Dorsolateral prefrontal cortex (tissue), 120 donors: ENCODE measurements at regions of chr15 and their contacts with region 1.

Region 1: GRCh38 chr15:73697033-73697467 is 12.9 kb downstream of the CD276 start:
- DNase-seq: peak; percentile 14 to 82 (median 70)
- H3K4me3 ChIP-seq: peak overlapping the region in 1 of 59 donors; percentile 10
- H3K27ac ChIP-seq: peak overlapping the region in 33 of 59 donors; percentile 5 to 72 (median 38)
- H3K27me3 ChIP-seq: no peaks in the 10 kb centered on the region
- CTCF ChIP-seq: peak in 5 of 56 donors; percentile 4 to 19 (median 8)

Region 2: DNA sequence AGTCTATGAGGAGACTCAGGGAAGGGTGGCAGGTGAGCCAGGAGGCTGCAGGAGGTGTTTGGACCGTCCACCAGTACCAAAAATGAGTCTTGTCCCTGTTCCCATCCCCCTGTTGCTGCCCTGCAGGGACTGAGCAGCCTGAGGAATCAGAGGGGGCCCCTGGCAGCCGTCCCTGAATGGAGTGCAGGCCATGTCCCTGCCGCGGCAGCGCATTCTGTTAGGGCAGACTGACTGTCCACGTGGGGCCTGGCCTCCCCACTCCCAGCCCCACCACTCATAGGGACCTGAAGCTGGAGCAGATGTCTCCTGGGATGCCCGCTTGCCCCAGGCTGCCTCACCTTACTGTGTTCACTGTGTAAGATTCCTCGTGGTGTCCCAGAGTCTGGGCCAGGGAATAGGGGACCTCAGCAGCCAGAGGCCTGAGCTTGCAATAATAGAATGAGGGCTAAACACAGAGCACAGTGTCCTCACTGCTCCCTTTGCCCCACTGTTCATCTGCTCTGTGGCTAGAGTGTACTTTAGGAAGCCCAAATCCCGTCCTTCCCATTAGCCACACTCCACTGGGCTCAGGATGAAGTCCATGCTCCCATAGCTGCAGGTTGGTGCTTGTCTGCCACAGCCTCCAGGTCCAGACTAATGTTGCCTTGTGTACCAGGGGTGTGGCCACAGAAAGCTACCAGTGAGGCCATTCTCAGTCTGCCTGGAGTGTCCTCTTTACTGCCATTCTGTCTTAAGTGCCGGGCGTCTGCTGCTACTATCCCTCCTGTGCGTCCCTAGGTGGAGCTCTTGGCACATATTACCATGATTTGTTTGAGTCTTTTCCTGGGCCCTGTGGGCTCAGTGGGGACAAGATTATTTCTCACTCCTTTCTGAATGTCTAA is 391.5 kb before region 1 on chr15:
- intact Hi-C with region 1: loop called in 1 of 2 experiments (anchors 10 kb)
- DNase-seq: peak in 2 of 10 donors; percentile 58 to 68
- H3K4me3 ChIP-seq: no peak overlapping the region
- H3K27ac ChIP-seq: peak overlapping the region in 7 of 59 donors; percentile 7 to 53 (median 23)
- H3K27me3 ChIP-seq: no peaks in the 10 kb centered on the region
- CTCF ChIP-seq: peak in 54 of 56 donors; percentile 19 to 67 (median 50)

Region 3: GRCh38 chr15:73457334-73457733 is 239.7 kb before region 1 on chr15:
- intact Hi-C with region 1: no loop called
- DNase-seq: no peak
- H3K4me3 ChIP-seq: no peak overlapping the region
- H3K27ac ChIP-seq: no peak overlapping the region
- H3K27me3 ChIP-seq: no peaks in the 10 kb centered on the region
- CTCF ChIP-seq: no peak

Region 4: GRCh38 chr15:73550190-73550589 is 146.9 kb before region 1 on chr15:
- intact Hi-C with region 1: loop called in 1 of 2 experiments (anchors 5 kb)
- DNase-seq: no peak
- H3K4me3 ChIP-seq: no peak overlapping the region
- H3K27ac ChIP-seq: no peak overlapping the region
- H3K27me3 ChIP-seq: no peaks in the 10 kb centered on the region
- CTCF ChIP-seq: no peak

Region 5: GRCh38 chr15:73560501-73561117 is 136.4 kb before region 1 on chr15:
- intact Hi-C with region 1: loop called (anchors 2 to 5 kb)
- DNase-seq: no peak
- H3K4me3 ChIP-seq: no peak overlapping the region
- H3K27ac ChIP-seq: peak overlapping the region in 9 of 59 donors; percentile 1 to 69 (median 17)
- H3K27me3 ChIP-seq: no peaks in the 10 kb centered on the region
- CTCF ChIP-seq: peak; percentile 44 to 88 (median 70)

Region 6: DNA sequence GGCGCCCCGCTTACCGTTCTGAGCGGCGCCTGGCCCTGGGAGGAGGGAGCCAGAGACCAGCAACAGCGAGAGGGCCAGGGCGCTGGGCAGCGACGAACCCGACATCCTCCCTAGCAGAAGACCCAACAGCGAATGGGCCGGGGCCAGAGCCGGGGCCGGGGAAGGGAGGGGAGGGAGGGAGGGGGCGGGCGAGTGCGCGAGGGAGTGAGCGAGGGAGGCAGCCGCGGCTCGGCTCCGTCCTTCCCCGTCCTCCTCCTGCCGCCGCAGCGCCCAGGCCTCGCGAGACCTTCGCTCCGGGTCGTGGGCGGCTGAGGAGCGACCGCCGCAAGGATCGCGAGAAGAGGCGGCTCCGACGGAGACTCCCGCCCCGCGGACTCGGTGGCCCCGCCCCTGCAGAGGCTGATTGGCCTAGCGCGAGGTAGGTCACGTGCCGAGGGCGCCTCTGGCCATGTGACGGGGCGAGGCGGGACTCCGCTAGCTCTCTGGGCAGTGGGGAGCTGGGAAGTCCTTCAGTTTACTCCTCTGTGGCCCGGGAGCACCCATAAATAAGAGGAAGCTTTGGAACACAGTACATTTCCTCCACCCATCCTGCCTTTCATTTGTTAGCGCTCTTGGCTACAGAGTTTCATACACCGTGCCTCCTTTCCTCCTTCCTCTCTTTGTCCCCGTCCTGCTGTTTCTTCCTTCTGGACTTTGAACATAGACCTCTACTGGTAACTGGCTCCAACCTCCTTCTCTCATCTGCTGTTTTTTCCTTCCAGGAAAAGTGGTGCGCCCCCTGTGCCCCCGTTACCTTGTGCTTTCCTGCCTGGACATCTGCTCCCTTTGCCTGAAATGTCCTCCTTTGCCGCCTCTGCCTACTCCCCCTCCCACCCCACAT is 63.7 kb before region 1 on chr15 and contains the start of gene NPTN:
- intact Hi-C with region 1: loop called (anchors 1 to 5 kb)
- DNase-seq: peak; percentile 96 to 100 (median 99)
- H3K4me3 ChIP-seq: peak within 1 kb of the TSS; percentile 37 to 99 (median 92)
- H3K27ac ChIP-seq: peak within 1 kb of the TSS; percentile 62 to 97 (median 92)
- H3K27me3 ChIP-seq: no peaks in the 10 kb centered on the region
- CTCF ChIP-seq: peak in 49 of 56 donors; percentile 4 to 67 (median 35)
- total RNA-seq, gene NPTN: 126 to 515 (median 369) TPM

Region 7: GRCh38 chr15:73794443-73795133 is 97.5 kb after region 1 on chr15:
- intact Hi-C with region 1: no loop called
- DNase-seq: no peak
- H3K4me3 ChIP-seq: no peak overlapping the region
- H3K27ac ChIP-seq: no peak overlapping the region
- H3K27me3 ChIP-seq: peaks cover 0 to 4% (median 0%) of the 10 kb centered on the region in 45 donors
- CTCF ChIP-seq: no peak

Region 8: DNA sequence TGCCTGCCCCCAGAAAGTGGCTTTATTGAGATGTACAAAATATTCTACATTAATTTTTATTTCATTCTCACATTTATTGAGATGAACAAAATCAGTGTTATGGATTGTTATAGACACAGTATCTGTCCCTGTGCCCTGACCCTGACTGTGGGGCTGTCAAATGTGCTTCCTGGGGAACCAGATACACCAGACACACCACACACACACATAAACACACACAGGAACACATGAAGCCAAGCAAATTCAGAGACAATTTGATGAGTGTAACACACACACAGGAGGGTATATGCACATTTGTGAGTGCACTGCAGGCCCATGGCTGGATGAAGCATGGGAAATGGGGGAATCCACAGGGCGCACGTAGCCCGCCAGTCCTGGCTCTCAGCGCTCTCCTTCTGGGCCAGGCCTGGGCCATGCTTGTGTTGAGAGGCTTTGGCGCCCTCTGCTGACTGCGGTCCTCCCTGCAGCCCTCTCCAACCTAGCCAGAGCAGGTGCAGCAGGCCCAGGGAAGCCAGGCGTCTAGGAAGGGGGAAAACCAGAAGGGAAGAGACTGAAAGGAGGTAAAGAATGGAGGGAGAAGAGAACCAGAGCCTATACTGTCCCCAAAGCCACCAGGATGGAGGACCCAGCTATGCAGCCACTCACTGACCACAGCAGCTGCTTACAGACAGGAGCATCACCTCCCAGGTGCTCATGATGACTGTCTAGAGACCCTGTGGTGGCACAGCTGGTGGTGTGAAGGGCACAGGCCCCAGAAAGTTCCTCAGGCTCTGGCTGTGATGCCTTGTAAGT is 211.2 kb after region 1 on chr15:
- intact Hi-C with region 1: loop called in 1 of 2 experiments (anchors 5 kb)
- DNase-seq: peak; percentile 71 to 90 (median 84)
- H3K4me3 ChIP-seq: no peak overlapping the region
- H3K27ac ChIP-seq: no peak overlapping the region
- H3K27me3 ChIP-seq: peaks cover 0 to 7% (median 0%) of the 10 kb centered on the region in 45 donors
- CTCF ChIP-seq: peak; percentile 49 to 95 (median 86)